IMR-90 (cell line): ENCODE measurements at regions of chr1 and their contacts with region 1.

Region 1: DNA sequence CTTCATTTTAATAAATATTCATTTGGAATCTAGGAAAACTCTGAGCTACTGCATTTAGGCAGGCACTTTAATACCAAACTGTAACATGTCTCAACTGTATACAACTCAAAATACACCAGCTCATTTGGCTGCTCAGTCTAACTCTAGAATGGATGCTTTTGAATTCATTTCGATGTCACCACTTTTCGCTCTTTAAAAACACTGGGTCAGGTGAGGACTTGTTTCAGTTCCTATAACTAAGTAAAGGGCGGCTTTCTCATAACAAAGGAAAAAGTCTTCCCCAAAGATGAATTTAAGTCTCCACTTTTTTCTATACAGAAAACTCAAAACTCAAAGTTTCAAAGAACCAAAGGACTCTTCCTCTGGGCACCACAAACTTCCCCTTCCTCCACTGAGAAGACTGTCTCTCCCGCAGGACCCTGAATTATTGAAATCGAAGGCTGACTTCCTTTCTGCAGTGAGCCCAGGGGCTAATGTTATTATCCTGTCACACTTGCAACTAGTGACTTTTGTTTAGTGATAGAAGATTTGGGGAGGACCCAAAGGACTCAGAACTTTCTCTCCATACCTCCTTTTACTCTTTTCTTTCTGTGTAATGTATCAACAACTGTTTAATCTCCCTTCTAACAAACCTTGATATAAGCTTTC is 9.7 kb upstream of the DHX9 start:
- DNase-seq: no peak
- ATAC-seq: no peak
- H3K4me3 ChIP-seq: no peak overlapping the region
- H3K27ac ChIP-seq: no peak overlapping the region
- H3K4me1 ChIP-seq: no peaks in the 10 kb centered on the region
- H3K27me3 ChIP-seq: peaks cover 19% of the 10 kb centered on the region
- CTCF ChIP-seq: no peak
- POLR2A ChIP-seq: no peak
- RAD21 ChIP-seq: no peak

Region 2: DNA sequence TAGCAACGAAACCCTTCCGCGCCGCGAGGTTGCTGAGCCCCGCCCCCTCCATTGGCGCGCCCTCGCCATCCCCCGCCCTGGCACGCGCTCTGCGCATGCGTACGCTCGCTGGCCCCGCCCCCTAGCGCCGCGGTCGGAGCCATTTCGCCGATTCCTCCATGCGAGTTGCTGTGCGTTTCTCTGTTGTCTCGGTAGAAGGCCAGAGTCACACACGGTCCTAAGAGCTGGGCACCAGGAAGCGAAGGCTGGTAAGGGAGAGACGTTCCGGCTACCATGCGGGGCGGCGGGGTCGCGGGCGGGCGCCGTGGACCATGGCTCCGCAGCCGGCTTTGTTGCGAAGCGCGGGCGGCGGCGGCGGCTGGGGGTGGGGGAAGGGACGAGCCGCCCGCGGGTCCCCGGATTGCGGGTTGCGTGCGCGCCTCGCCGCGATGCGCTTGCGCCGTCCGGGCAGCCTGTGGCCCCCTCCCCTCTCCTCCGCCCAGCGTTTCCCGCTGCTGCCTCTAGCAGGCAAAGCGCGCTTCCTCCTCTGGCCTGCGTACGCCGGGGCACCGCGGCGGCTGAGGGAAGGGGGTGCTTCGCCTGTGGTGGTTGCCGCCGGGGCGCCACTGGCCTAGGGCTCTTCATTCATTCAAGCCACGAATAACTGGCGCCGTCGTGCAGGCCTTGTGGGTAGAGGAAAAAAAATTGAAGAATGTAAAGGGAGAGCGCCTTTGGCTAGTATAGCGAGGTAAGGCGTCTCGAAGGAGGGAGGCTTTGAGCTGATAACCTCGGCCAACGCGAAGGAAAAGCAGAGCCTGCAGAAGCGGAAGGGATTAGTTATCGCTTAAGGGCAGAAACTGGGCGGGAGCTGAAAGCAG is 10.0 kb after region 1 on chr1 and contains the start of gene DHX9:
- CTCF ChIA-PET with region 1: no interaction called
- POLR2A ChIA-PET with region 1: interaction called, 11 read pairs
- dilution Hi-C with region 1: no loop called
- in situ Hi-C with region 1: no loop called
- intact Hi-C with region 1: no loop called
- DNase-seq: peak; percentile 85
- ATAC-seq: peak; percentile 89
- H3K4me3 ChIP-seq: peak within 1 kb of the TSS; percentile 75
- H3K27ac ChIP-seq: peak within 1 kb of the TSS; percentile 94
- H3K4me1 ChIP-seq: peaks cover 2% of the 10 kb centered on the region; the same call in 1 of the 2 replicates
- H3K27me3 ChIP-seq: no peaks in the 10 kb centered on the region
- CTCF ChIP-seq: peak; percentile 26; the same call in 1 of the 2 replicates
- POLR2A ChIP-seq: peak; percentile 97
- RAD21 ChIP-seq: no peak
- total RNA-seq, gene DHX9: 211 and 234 TPM in 2 replicates

Region 3: DNA sequence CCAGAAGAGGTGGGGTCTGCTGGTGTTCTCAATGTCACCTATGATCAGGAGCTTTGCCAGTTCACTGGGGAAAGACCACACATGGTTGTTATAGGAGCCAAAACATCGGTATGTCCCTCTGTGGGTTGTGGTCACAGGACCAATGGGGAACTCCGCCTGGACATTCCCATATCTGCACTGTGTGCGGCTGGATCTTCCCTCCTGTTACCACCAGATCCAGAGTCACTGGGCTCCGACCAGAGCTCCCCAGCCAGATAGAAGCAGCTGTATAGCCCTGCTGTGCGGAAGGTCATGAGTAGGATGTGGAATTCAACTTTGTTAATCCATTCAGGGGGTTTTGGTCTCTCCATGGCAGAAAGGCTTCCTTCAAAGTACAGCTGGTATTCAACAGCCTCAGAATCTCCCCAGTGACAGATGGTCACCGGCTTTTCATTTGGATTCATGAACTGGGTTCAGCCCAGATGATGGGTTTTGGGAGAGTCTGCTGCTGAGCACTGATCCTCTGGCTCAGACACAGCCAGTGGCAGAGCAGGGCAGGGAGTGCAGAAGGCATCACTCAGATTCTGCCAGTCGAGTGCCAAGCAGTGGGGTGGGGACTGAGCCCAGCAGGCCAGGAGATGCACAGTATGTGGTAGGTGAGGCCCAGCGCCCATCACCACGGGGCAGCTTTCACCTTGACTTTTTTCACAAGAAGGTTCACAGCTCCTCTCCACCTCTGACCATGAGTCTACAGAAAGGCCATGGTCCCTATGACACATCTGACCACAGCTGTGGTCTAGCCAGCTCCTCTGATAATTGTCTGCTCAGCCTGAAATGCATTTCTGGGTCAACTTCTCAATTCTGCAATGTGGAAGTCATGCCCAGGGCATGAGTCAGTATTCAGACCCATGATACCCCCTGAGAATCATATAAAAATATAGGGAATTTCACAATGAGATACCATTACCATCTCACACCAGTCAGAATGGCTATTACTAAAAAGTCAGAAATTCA is 126.5 kb after region 1 on chr1:
- CTCF ChIA-PET with region 1: no interaction called
- POLR2A ChIA-PET with region 1: no interaction called
- dilution Hi-C with region 1: no loop called
- in situ Hi-C with region 1: no loop called
- intact Hi-C with region 1: no loop called
- DNase-seq: peak; percentile 92
- ATAC-seq: peak; percentile 94
- H3K4me3 ChIP-seq: no peak overlapping the region
- H3K27ac ChIP-seq: no peak overlapping the region
- H3K4me1 ChIP-seq: peaks cover 2% of the 10 kb centered on the region; the same call in 1 of the 2 replicates
- H3K27me3 ChIP-seq: peaks cover 12% of the 10 kb centered on the region
- CTCF ChIP-seq: no peak
- POLR2A ChIP-seq: no peak
- RAD21 ChIP-seq: no peak